ENCODE measurements at regions of chr1 and their contacts with region 1.

Region 1: DNA sequence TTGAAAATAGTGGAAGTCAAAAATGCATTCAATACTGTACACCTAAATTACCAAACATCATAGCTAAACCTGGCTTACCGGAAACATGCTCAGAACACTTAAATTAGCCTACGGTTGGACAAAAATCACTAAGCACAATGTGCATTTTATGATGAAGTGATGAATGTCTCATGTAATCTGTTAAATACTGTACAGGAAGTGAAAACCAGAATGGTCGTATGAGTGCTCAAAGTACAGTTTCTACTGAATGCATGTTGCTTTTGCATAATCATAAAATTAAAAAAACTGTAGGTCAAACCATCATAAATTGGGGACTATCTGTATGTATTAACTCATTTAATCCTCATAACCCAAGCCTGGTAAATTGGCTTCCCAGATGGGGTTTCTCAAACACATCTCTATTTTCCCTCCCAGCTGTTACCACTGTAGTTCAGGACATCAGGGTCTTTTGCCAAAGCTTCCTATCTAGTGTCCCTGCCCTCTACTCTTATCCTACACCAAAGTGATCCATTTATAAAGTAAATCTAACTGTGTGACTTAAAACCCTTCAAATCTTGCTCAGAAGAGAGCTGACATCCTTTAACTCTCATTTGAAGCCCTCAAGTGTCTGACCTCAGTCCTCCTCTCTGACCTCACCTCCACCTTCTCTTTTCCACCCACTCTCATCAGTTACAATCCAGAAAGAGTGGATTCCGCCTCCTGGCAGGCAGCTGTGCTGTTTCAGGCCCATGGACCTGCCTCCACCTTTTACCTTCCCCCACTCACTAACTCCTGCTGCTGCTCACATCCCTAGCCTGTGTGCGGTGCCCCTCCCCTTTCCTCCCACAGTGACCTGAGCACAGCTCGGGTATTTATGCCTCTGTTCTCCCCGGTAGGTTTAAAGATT is 356.4 kb upstream of the ST6GALNAC5 start:
- DNase-seq: no peak
- H3K4me3 ChIP-seq: no peak overlapping the region
- H3K27ac ChIP-seq: no peak overlapping the region
- H3K4me1 ChIP-seq: no peaks in the 10 kb centered on the region
- H3K27me3 ChIP-seq: no peaks in the 10 kb centered on the region
- CTCF ChIP-seq: no peak
- POLR2A ChIP-seq: no peak

Region 2: DNA sequence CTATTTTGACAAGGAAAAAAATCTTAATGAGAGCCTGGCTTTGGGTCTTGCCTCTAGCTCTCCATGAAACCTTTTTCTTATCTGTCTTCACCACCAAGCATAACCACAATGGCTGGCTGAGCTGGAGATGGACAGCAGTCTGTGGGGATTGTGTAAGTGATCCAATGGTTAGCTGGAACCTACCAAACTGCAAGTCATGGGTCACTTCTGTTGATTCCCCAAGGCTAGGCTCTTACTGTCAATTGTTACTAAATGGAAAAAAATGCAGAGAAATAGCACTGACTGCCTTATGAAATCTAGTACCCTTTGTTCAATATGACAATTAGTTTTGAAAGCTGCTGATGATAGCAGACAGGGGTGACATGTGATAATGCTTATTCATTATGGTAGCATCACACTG is 77.4 kb before region 1 on chr1:
- CTCF ChIA-PET with region 1: no interaction called
- POLR2A ChIA-PET with region 1: no interaction called
- dilution Hi-C with region 1: no loop called
- intact Hi-C with region 1: no loop called
- DNase-seq: no peak
- H3K4me3 ChIP-seq: no peak overlapping the region
- H3K27ac ChIP-seq: no peak overlapping the region
- H3K4me1 ChIP-seq: no peaks in the 10 kb centered on the region
- H3K27me3 ChIP-seq: no peaks in the 10 kb centered on the region
- CTCF ChIP-seq: no peak
- POLR2A ChIP-seq: no peak

Region 3: GRCh38 chr1:76496871-76497270 is 14.0 kb before region 1 on chr1:
- CTCF ChIA-PET with region 1: interaction called, 3 read pairs
- POLR2A ChIA-PET with region 1: no interaction called
- dilution Hi-C with region 1: no loop called
- intact Hi-C with region 1: loop called (anchors 2 kb)
- DNase-seq: peak; percentile 15
- H3K4me3 ChIP-seq: no peak overlapping the region
- H3K27ac ChIP-seq: no peak overlapping the region
- H3K4me1 ChIP-seq: peaks cover 9% of the 10 kb centered on the region
- H3K27me3 ChIP-seq: no peaks in the 10 kb centered on the region
- CTCF ChIP-seq: no peak
- POLR2A ChIP-seq: no peak

Region 4: DNA sequence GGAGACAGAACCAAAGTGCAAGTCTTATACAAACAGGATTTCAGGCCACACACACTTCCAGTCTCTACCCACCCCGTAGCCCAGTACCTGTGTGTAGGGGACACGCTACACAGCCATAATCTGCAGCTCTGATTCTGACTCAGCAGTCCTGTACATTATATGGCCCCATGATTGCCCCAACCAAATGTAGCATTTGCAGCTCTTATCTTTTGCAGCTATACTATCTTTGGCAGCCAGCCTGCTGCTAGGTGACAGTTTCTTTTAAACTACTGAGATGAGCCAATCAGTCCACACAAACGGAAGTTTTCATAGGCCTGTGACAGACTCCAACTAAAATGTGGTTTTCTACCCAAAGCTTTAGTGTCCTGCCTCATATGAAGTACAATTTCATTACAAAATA is 96.8 kb after region 1 on chr1:
- CTCF ChIA-PET with region 1: no interaction called
- POLR2A ChIA-PET with region 1: no interaction called
- dilution Hi-C with region 1: no loop called
- intact Hi-C with region 1: no loop called
- DNase-seq: no peak
- H3K4me3 ChIP-seq: no peak overlapping the region
- H3K27ac ChIP-seq: no peak overlapping the region
- H3K4me1 ChIP-seq: no peaks in the 10 kb centered on the region
- H3K27me3 ChIP-seq: no peaks in the 10 kb centered on the region
- CTCF ChIP-seq: no peak
- POLR2A ChIP-seq: no peak

Measured in endothelial cell of umbilical vein (primary cell).